Mucosa of descending colon (tissue), 3 donors: ENCODE measurements at regions of chr20 and their contacts with region 1.

Region 1: GRCh38 chr20:5056801-5057599 is 55.7 kb upstream of the SLC23A2 start:
- DNase-seq: peak; percentile 41 to 79 (median 71)
- ATAC-seq: peak; percentile 88
- H3K4me3 ChIP-seq: no peak overlapping the region
- H3K4me1 ChIP-seq: no peaks in the 10 kb centered on the region
- CTCF ChIP-seq: no peak

Region 2: GRCh38 chr20:5100684-5101347 is 43.8 kb after region 1 on chr20:
- intact Hi-C with region 1: loop called in 1 of 2 experiments (anchors 2 kb)
- DNase-seq: peak; percentile 70 to 89 (median 81)
- ATAC-seq: peak; percentile 93
- H3K4me3 ChIP-seq: no peak overlapping the region
- H3K4me1 ChIP-seq: no peaks in the 10 kb centered on the region
- CTCF ChIP-seq: peak; percentile 67